ENCODE measurements at regions of chr3 and their contacts with region 1.

Region 1: GRCh38 chr3:66938338-66938963 is 59.7 kb upstream of the KBTBD8 start:
- DNase-seq: peak; percentile 73
- H3K4me3 ChIP-seq: no peak overlapping the region
- H3K27ac ChIP-seq: no peak overlapping the region
- H3K4me1 ChIP-seq: no peaks in the 10 kb centered on the region
- CTCF ChIP-seq: peak; percentile 89

Region 2: GRCh38 chr3:66803206-66803605 is 135.2 kb before region 1 on chr3:
- CTCF ChIA-PET with region 1: no interaction called
- POLR2A ChIA-PET with region 1: no interaction called
- intact Hi-C with region 1: no loop called
- DNase-seq: no peak
- H3K4me3 ChIP-seq: no peak overlapping the region
- H3K27ac ChIP-seq: no peak overlapping the region
- H3K4me1 ChIP-seq: no peaks in the 10 kb centered on the region
- CTCF ChIP-seq: peak; percentile 34; the same call in 1 of the 2 replicates

Region 3: GRCh38 chr3:67037615-67038014 is 99.2 kb after region 1 on chr3:
- CTCF ChIA-PET with region 1: interaction called, 4 read pairs
- POLR2A ChIA-PET with region 1: no interaction called
- intact Hi-C with region 1: loop called (anchors 1 kb)
- DNase-seq: peak; percentile 50
- H3K4me3 ChIP-seq: no peak overlapping the region
- H3K27ac ChIP-seq: no peak overlapping the region
- H3K4me1 ChIP-seq: peaks cover 8% of the 10 kb centered on the region
- CTCF ChIP-seq: peak; percentile 69

Region 4: GRCh38 chr3:67113802-67114407 is 175.5 kb after region 1 on chr3:
- CTCF ChIA-PET with region 1: no interaction called
- POLR2A ChIA-PET with region 1: no interaction called
- intact Hi-C with region 1: loop called (anchors 2 kb)
- DNase-seq: peak; percentile 80
- H3K4me3 ChIP-seq: no peak overlapping the region
- H3K27ac ChIP-seq: no peak overlapping the region
- H3K4me1 ChIP-seq: no peaks in the 10 kb centered on the region
- CTCF ChIP-seq: peak; percentile 99

Region 5: GRCh38 chr3:67384760-67385397 is 446.4 kb after region 1 on chr3:
- CTCF ChIA-PET with region 1: interaction called, 3 read pairs
- POLR2A ChIA-PET with region 1: no interaction called
- intact Hi-C with region 1: loop called (anchors 10 kb)
- DNase-seq: peak; percentile 63
- H3K4me3 ChIP-seq: no peak overlapping the region
- H3K27ac ChIP-seq: no peak overlapping the region
- H3K4me1 ChIP-seq: peaks cover 8% of the 10 kb centered on the region
- CTCF ChIP-seq: peak; percentile 85

Region 6: GRCh38 chr3:68876112-68876713 is 1937.8 kb after region 1 on chr3:
- CTCF ChIA-PET with region 1: no interaction called
- POLR2A ChIA-PET with region 1: no interaction called
- intact Hi-C with region 1: loop called (anchors 5 kb)
- DNase-seq: peak; percentile 66
- H3K4me3 ChIP-seq: no peak overlapping the region
- H3K27ac ChIP-seq: no peak overlapping the region
- H3K4me1 ChIP-seq: no peaks in the 10 kb centered on the region
- CTCF ChIP-seq: peak; percentile 99